Head of caudate nucleus (tissue), 42 donors: ENCODE measurements at regions of chr11 and their contacts with region 1.

Region 1: GRCh38 chr11:34585735-34586487 is 35.0 kb upstream of the EHF start:
- DNase-seq: peak in 5 of 42 donors; percentile 13 to 56 (median 20)

Region 2: DNA sequence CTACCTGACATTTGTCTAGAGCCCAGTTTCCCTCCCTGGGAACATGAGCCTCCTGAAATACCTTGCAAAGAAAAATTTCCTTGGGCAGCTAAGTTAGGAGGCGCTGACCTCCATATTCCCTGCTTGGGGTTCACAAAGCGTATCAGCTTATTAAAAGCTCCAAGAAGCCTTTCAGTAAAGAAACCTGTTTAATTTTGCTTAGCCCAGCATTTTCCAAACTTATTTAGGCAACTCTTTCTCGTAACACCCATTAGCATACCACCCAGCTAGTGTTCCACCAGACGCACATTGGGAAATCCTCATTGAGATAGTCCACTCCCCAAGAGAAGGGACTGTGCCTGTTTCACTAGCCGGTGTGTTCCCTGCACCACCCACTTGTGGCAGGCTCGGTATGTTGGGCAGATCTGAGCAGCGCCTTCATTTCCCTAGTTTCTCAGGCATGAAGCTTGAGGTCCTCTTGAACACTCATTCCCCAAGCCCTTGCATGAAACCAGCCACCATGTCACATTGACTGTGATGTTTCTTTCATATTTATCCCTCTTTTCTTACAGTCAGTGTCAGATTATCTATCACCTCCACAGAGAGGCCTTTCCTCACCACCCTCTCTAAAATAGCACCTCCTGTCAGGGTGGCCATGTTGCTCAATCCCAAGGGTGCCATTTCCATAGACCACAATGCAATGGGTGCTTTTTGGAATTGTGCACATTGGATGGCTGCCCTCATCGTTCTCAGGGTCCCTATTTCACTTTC is 59.8 kb before region 1 on chr11:
- intact Hi-C with region 1: no loop called
- DNase-seq: no peak

Region 3: GRCh38 chr11:34791780-34792542 is 206.1 kb after region 1 on chr11:
- intact Hi-C with region 1: loop called (anchors 5 kb)
- DNase-seq: no peak

Region 4: GRCh38 chr11:34890812-34891211 is 304.9 kb after region 1 on chr11:
- intact Hi-C with region 1: loop called (anchors 5 kb)
- DNase-seq: peak in 1 of 42 donors; percentile 44